Gastrocnemius medialis (tissue), 4 donors: ENCODE measurements at regions of chr5 and their contacts with region 1.

Region 1: DNA sequence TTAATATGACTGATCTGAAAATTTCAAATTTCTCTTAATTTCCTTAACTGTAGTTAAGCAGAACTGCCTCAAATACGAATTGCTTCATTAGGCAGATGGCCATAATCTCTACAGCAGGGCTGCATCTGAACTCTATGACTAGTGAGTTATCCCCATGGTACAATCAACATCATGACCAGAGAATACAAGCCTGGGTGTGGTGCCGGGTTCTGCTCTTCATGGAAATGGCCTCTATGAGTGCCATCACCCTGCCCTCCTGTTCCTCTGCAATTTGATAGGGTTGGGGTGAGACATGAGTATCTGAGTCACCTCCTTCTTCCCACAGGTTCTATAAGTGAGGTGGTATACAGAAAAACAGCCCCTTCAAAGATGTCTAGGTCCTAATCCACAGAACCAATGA is 235.9 kb downstream of the AP3B1 start:
- DNase-seq: no peak
- ATAC-seq: no peak
- H3K4me3 ChIP-seq: no peak overlapping the region
- H3K27ac ChIP-seq: no peak overlapping the region
- H3K4me1 ChIP-seq: no peaks in the 10 kb centered on the region
- H3K27me3 ChIP-seq: no peaks in the 10 kb centered on the region
- CTCF ChIP-seq: no peak
- POLR2A ChIP-seq: no peak

Region 2: GRCh38 chr5:77924081-77924480 is 134.5 kb before region 1 on chr5:
- in situ Hi-C with region 1: no loop called
- intact Hi-C with region 1: no loop called
- DNase-seq: no peak
- ATAC-seq: no peak
- H3K4me3 ChIP-seq: no peak overlapping the region
- H3K27ac ChIP-seq: no peak overlapping the region
- H3K4me1 ChIP-seq: no peaks in the 10 kb centered on the region
- H3K27me3 ChIP-seq: peaks cover 0 to 5% (median 4%) of the 10 kb centered on the region in 3 donors
- CTCF ChIP-seq: no peak
- POLR2A ChIP-seq: no peak

Region 3: GRCh38 chr5:78001197-78001596 is 57.4 kb before region 1 on chr5:
- in situ Hi-C with region 1: no loop called
- intact Hi-C with region 1: loop called (anchors 2 kb)
- DNase-seq: no peak
- ATAC-seq: no peak
- H3K4me3 ChIP-seq: no peak overlapping the region
- H3K27ac ChIP-seq: no peak overlapping the region
- H3K4me1 ChIP-seq: peaks cover 5 to 6% of the 10 kb centered on the region in 2 donors
- H3K27me3 ChIP-seq: no peaks in the 10 kb centered on the region
- CTCF ChIP-seq: no peak
- POLR2A ChIP-seq: no peak